OCI-LY7 (cell line): ENCODE measurements at regions of chr13 and their contacts with region 1.

Region 1: GRCh38 chr13:88979465-88980175 is 1308.4 kb downstream of the SLITRK5 start:
- DNase-seq: no peak
- H3K4me3 ChIP-seq: no peak overlapping the region
- H3K27ac ChIP-seq: no peak overlapping the region
- H3K4me1 ChIP-seq: no peaks in the 10 kb centered on the region
- CTCF ChIP-seq: 0 out of 2 replicates have a peak, but pooled peaks have one; percentile 8

Region 2: DNA sequence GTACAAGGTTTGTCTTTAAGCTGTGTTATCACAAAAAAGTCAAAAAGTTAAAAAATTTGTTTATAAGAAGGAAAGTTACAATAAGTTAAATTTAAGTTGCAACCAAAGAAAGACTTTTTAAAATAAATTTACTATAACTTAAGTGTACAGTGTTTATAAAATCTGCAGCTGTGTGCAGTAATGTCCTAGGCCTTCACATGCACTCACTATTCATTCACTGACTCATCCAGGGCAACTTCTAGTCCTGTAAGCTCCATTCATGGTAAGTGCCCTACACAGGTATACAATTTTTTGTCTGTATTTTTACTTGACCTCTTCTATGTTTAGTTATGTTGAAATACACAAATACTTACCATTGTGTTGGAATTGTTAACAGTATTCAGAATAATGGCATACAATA is 1976.4 kb before region 1 on chr13:
- CTCF ChIA-PET with region 1: no interaction called
- POLR2A ChIA-PET with region 1: no interaction called
- intact Hi-C with region 1: loop called (anchors 5 kb)
- DNase-seq: no peak
- H3K4me3 ChIP-seq: no peak overlapping the region
- H3K27ac ChIP-seq: no peak overlapping the region
- H3K4me1 ChIP-seq: no peaks in the 10 kb centered on the region
- CTCF ChIP-seq: no peak